Colonic mucosa (tissue), 4 donors: ENCODE measurements at regions of chr11 and their contacts with region 1.

Region 1: DNA sequence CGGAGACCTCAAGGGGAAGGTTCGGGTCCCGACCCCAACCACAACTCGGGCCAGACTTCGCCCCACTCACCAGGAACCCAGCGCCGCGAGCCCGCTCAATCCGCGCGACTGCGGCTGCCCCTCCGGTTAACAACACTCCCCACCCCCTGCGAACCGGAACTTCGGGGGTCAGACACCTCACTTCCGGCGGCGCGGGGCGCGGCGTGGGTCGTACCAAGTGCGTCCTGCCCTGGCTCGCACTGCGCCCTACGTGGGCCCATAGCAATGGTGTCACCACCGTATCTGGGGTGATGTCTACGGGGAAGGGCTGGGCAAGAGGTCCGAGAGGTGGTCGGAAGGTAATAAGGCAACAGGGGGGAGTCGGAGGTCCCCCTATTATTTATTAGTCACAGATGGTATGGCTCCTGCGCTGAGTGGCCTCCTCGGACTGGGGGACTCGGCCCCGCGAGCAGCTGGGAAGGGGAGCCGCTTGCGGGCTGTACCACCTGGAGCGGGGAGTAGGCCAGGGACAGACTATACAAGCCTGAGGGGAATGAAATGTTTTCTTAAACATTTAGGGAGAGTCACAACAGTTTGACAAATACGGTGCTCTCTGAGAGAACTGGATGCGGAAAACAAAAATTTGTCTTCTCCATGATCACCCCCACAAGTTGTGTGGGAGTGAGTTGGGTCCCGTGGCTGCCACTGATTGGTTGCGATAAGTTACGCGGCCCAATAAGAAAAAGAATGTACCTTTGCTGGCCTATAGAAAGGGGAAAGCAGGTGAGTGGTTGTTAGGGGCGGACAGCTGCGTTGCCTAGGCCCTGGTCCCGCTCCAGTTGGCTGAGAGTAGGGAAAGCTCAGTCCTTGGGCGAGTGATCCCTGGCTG is at the start of gene SYVN1:
- DNase-seq: peak; percentile 96
- H3K4me3 ChIP-seq: peak within 1 kb of the TSS; percentile 86
- H3K27ac ChIP-seq: peak within 1 kb of the TSS; percentile 94
- H3K4me1 ChIP-seq: peaks cover 15% of the 10 kb centered on the region
- H3K27me3 ChIP-seq: no peaks in the 10 kb centered on the region
- CTCF ChIP-seq: no peak
- total RNA-seq, gene SYVN1: 64.3 to 66.0 TPM

Region 2: DNA sequence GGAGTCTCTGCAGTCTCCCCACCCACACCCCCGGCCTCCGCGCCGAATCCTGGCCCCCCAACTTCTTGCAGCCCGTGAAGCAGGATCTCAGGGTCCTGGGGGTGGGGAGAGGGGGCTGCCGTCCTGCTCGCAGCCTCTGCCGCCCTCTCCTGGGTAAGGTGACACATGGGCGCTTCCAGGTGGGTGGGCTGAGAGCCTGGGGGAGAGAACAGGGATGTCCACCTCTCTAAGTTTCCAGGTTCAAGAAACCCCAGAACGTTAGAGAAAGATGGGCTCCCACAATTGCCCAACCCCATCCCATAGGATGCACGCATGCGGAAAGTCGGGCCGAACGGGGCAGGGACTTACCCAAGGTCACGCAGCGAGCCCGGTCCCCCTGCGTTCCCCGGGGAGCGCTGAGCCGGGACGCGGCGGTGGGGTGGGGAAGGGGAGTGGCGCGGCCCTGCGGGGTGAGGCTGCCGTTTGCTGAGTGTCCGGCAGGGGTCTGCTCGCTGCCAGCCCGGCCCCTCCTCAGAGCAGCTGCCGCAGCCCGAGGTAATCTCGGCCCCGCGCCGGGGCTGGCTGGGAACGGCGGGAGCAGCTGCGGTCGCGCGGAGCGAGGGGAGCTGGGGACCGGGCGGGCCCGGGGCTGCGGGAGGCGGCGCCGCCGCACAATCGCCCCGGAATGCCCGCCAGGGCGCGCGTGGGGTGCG is 46.4 kb after region 1 on chr11:
- intact Hi-C with region 1: loop called (anchors 5 kb)
- DNase-seq: peak; percentile 64
- H3K4me3 ChIP-seq: peak overlapping the region; percentile 94
- H3K27ac ChIP-seq: peak overlapping the region; percentile 97
- H3K4me1 ChIP-seq: peaks cover 12% of the 10 kb centered on the region
- H3K27me3 ChIP-seq: no peaks in the 10 kb centered on the region
- CTCF ChIP-seq: no peak